AG04449 (cell line): ENCODE measurements at regions of chr12 and their contacts with region 1.

Region 1: DNA sequence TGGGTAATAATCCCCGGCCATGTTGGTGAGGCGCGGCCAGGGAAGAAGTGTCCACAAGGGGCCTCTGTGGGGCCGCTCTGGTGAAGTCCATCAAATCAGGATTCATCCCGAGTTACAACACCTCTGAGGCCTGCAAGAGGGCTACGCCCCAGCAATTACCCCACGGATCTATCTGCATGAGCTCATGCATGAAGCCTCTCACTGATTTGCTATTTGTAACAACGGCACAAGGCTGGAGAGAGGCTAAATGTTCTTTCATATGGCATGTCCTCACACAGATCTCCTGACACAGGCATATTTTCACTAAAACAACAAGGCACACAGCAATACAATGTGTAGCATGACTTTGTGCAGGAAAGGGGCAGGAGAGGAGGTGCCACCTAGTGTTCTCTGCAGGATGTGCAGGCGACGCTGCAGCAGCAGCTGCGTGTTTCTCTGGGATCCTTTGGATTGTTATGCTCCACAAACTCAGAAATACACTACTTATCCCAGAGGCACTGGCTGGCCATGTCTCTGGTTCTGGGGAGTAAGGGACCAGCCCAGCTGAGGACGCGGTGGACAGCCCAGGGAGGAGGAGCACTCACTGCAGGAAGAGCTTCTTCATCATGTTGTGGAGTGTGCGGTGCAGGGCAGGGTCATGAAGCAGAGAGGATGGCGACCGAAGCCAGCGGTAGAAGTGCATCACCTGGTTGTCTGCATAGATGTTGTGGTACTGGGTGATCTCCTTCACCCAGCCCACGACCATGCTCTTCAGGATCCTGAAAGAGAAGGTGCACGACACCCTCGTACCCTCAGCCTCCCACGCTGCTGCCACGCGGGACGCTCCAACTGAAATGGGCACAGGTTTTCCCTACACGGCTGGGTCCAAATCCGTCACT is 20.2 kb downstream of the P2RX2 start:
- DNase-seq: peak; percentile 10
- H3K4me3 ChIP-seq: no peak overlapping the region
- CTCF ChIP-seq: peak; percentile 92

Region 2: GRCh38 chr12:132583736-132584135 is 55.0 kb before region 1 on chr12:
- CTCF ChIA-PET with region 1: no interaction called
- POLR2A ChIA-PET with region 1: no interaction called
- DNase-seq: no peak
- H3K4me3 ChIP-seq: no peak overlapping the region
- CTCF ChIP-seq: no peak

Region 3: GRCh38 chr12:132600048-132601032 is 38.4 kb before region 1 on chr12:
- CTCF ChIA-PET with region 1: interaction called, 19 read pairs
- POLR2A ChIA-PET with region 1: no interaction called
- DNase-seq: no peak
- H3K4me3 ChIP-seq: peak overlapping the region; percentile 54
- CTCF ChIP-seq: peak; percentile 85

Region 4: GRCh38 chr12:132622437-132623334 is 16.1 kb before region 1 on chr12:
- CTCF ChIA-PET with region 1: interaction called, 45 read pairs
- POLR2A ChIA-PET with region 1: no interaction called
- DNase-seq: peak; percentile 46
- H3K4me3 ChIP-seq: no peak overlapping the region
- CTCF ChIP-seq: no peak

Region 5: DNA sequence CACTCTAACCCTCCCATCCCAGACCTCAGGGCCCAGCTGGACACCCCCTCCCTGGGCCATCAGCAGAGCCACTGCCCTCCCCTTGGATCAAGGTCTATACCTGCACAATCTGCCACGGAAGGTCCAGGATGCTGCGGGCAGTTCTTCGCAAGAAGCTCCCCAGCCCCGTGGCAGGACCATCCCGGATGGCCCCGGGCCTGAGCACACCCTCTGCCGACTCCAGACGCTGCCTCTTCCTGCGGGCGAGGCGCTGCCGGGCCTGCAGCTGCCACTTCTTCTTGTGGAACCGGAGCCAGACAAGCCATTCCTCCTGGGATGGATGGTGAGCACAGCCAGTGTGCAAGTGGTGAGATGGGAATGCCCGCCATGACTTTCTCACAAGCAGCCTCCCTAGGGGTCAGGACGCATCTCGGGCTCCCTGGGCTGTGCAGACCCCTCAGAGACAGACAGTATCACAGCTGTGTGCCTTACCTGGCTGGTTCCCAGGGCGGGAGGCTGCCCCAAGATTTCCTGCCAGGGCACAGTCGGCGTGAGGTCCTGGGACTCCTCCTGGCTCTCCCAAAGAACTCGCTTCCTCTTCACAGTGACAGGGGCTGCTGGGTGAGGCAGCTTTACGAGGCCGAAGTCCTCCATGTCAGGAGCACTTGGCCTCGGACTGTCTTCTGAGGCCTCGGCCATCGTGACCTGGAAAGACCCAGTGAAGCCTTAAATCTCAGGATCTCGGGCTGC is 10.6 kb after region 1 on chr12:
- CTCF ChIA-PET with region 1: interaction called, 39 read pairs
- POLR2A ChIA-PET with region 1: no interaction called
- DNase-seq: no peak
- H3K4me3 ChIP-seq: no peak overlapping the region
- CTCF ChIP-seq: no peak

Region 6: DNA sequence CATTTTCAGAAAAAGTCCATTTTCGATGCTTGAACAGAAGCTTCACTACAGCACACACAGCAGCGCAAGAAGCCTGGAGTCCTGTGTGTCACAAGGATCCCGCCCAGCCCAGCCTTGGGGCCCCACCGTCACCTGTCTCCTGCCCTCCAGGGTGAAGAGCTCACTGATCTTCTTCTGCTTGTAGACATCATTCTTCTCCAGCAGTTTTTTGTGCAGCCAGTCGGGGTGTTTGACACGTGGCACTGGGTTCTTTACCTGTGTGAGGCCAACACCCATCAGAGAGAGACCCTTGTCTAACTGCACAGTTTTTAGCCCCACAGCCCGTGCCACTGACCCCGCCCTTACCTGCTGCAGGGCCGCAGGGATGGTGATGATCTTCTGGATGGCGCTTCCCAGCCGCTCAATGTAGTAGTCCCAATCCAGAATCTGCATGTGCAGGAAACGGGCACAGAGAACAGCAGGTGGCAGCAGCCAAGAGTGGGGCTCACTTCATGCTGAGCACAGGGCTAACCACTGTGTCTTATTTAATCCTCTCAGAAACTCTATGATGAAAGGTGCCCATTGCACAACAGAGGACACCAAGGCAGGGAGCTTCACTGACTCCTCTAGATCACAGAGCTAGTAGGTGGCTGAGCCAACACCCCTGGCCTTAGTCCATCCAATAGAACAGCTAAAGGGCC is 18.4 kb after region 1 on chr12:
- CTCF ChIA-PET with region 1: interaction called, 36 read pairs
- POLR2A ChIA-PET with region 1: no interaction called
- DNase-seq: no peak
- H3K4me3 ChIP-seq: no peak overlapping the region
- CTCF ChIP-seq: no peak

Region 7: DNA sequence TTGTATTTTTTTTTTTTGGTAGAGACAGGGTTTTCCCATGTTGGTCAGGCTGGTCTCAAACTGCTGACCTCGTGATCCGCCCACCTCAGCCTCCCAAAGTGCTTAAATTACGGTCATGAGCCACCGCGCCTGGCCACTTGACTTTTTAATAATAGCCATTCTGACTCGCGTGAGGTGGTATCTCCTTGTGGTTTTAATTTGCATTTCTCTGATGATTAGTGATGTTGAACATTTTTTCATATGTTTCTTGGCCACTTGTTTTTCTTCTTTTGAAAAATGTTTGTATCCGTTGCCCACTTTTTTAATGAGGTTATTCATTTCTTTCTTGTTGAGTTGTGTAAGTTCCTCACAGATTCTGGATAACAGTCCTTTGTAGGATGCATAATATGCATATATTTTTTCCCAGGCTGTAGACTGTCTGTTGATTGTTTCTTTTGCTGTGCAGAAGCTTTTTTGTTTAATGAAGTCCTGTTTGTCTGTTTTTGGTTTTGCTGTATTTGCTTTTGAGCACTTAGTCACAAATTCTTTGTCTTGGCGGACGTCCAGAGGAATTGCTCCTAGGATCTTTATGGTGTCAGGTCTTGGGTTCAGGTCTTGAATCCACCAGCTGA is 61.5 kb after region 1 on chr12:
- CTCF ChIA-PET with region 1: no interaction called
- POLR2A ChIA-PET with region 1: no interaction called
- DNase-seq: no peak
- H3K4me3 ChIP-seq: no peak overlapping the region
- CTCF ChIP-seq: no peak

Region 8: GRCh38 chr12:132771126-132771838 is 132.5 kb after region 1 on chr12:
- CTCF ChIA-PET with region 1: no interaction called
- POLR2A ChIA-PET with region 1: no interaction called
- DNase-seq: no peak
- H3K4me3 ChIP-seq: no peak overlapping the region
- CTCF ChIP-seq: no peak